ENCODE measurements at regions of chr1 and their contacts with region 1.

Region 1: GRCh38 chr1:225428068-225428880 is 436 bp upstream of the LBR start:
- DNase-seq: peak; percentile 99
- H3K4me3 Mint-ChIP-seq: peak overlapping the region; percentile 75
- H3K27ac Mint-ChIP-seq: peak overlapping the region; percentile 20
- H3K4me1 Mint-ChIP-seq: peaks cover 35% of the 10 kb centered on the region
- H3K27me3 Mint-ChIP-seq: no peaks in the 10 kb centered on the region
- CTCF ChIP-seq: no peak

Region 2: DNA sequence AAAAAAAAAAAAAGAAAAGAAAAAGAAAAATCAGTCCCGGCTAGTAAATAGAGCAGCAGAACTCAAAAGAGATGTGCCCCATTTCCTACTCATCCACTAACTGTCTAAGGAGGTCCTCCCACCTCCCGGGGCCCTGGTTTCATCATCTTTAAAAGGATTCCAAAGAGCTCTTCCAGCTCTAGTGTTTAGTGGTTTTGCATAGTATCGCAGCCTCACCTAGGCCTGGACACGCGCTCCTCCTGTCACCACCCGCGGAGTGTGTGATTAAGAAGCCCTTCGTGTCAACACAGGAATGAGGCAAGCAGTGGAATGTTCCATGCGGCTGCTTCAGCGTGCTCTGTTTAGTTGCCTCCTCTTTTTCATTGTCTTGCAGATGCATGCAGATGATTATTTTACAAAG is 49.4 kb before region 1 on chr1:
- CTCF ChIA-PET with region 1: interaction called, 8 read pairs
- POLR2A ChIA-PET with region 1: interaction called, 55 read pairs
- intact Hi-C with region 1: no loop called
- DNase-seq: peak; percentile 83
- H3K4me3 Mint-ChIP-seq: no peak overlapping the region
- H3K27ac Mint-ChIP-seq: peak overlapping the region; percentile 21
- H3K4me1 Mint-ChIP-seq: peaks cover 6% of the 10 kb centered on the region
- H3K27me3 Mint-ChIP-seq: no peaks in the 10 kb centered on the region
- CTCF ChIP-seq: no peak

Region 3: GRCh38 chr1:225413708-225414375 is 14.4 kb before region 1 on chr1:
- CTCF ChIA-PET with region 1: interaction called, 31 read pairs
- POLR2A ChIA-PET with region 1: interaction called, 67 read pairs
- intact Hi-C with region 1: no loop called
- DNase-seq: no peak
- H3K4me3 Mint-ChIP-seq: no peak overlapping the region
- H3K27ac Mint-ChIP-seq: no peak overlapping the region
- H3K4me1 Mint-ChIP-seq: peaks cover 7% of the 10 kb centered on the region
- H3K27me3 Mint-ChIP-seq: no peaks in the 10 kb centered on the region
- CTCF ChIP-seq: no peak

Region 4: GRCh38 chr1:225454733-225455132 is 26.5 kb after region 1 on chr1:
- CTCF ChIA-PET with region 1: interaction called, 7 read pairs
- POLR2A ChIA-PET with region 1: interaction called, 611 read pairs
- intact Hi-C with region 1: no loop called
- DNase-seq: peak; percentile 96
- H3K4me3 Mint-ChIP-seq: peak overlapping the region; percentile 2
- H3K27ac Mint-ChIP-seq: peak overlapping the region; percentile 60
- H3K4me1 Mint-ChIP-seq: peaks cover 61% of the 10 kb centered on the region
- H3K27me3 Mint-ChIP-seq: no peaks in the 10 kb centered on the region
- CTCF ChIP-seq: no peak

Region 5: GRCh38 chr1:226274138-226274537 is 845.9 kb after region 1 on chr1:
- CTCF ChIA-PET with region 1: no interaction called
- POLR2A ChIA-PET with region 1: no interaction called
- intact Hi-C with region 1: no loop called
- DNase-seq: no peak
- H3K4me3 Mint-ChIP-seq: no peak overlapping the region
- H3K27ac Mint-ChIP-seq: no peak overlapping the region
- H3K4me1 Mint-ChIP-seq: peaks cover 6% of the 10 kb centered on the region
- H3K27me3 Mint-ChIP-seq: no peaks in the 10 kb centered on the region
- CTCF ChIP-seq: no peak

Region 6: DNA sequence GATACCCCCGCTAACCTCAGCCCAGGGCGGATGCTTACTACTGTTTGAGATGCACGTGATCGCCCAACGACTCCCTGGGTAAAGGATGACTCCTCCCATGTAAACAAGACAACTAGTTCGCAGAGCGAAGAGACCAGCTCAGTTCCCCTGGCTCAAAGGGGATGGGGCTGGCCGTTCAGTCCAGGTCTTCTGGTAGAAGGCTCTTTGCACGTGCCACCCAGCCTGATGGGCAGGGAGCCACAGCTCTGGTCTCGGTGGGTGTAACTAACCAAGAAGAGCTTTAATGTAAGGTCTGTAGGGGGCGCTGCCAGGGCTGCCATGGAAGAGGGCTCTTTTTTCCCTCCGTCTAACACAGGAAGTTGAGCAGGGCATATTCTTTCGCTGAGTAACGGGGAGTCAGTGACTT is 1029.0 kb after region 1 on chr1:
- CTCF ChIA-PET with region 1: no interaction called
- POLR2A ChIA-PET with region 1: no interaction called
- intact Hi-C with region 1: no loop called
- DNase-seq: no peak
- H3K4me3 Mint-ChIP-seq: no peak overlapping the region
- H3K27ac Mint-ChIP-seq: no peak overlapping the region
- H3K4me1 Mint-ChIP-seq: no peaks in the 10 kb centered on the region
- H3K27me3 Mint-ChIP-seq: peaks cover 13% of the 10 kb centered on the region
- CTCF ChIP-seq: peak; percentile 18